Activated T-helper 2 cell treated with anti-CD3 and anti-CD28 coated beads, Interferon-gamma antibody, Interleukin-2, Interleukin-4, amounts not matched to agents 10 μg/mL and 5 μg/mL and 100 μg/mL, durations not matched to agents 14 hours and 24 hours and 36 hours (primary cell): ENCODE measurements at regions of chr9 and their contacts with region 1.

Region 1: DNA sequence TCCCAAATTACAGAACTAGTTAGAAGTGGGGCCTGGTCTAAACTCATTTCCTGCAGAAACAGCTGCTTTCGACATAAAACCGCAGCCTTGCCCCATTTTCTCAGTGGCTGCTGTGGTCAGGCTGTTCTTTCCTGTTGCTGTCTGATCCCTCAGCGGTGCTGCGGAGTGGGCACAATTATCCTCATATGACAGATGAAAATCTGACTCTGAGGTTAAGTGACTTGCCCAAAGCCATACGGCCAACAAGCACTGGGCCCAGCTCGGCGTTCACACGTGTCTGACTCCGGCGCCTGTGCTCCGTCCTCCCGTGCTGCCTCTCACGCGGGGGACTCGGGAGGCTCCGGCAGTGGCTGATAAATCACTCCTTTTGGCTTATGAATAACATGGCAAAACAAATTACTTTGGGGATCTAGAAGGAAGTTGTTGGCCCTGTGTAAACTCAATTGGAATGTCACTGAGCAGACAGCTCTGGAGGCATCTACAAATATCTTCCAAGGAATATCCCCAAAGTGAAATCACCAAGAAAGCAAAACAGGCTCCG is 142.6 kb upstream of the LMX1B start:
- DNase-seq: peak; percentile 81
- H3K4me3 Mint-ChIP-seq: peak overlapping the region; percentile 41
- H3K27ac Mint-ChIP-seq: peak overlapping the region; percentile 51
- H3K4me1 Mint-ChIP-seq: peaks cover 44% of the 10 kb centered on the region
- H3K27me3 Mint-ChIP-seq: peaks cover 63% of the 10 kb centered on the region

Region 2: DNA sequence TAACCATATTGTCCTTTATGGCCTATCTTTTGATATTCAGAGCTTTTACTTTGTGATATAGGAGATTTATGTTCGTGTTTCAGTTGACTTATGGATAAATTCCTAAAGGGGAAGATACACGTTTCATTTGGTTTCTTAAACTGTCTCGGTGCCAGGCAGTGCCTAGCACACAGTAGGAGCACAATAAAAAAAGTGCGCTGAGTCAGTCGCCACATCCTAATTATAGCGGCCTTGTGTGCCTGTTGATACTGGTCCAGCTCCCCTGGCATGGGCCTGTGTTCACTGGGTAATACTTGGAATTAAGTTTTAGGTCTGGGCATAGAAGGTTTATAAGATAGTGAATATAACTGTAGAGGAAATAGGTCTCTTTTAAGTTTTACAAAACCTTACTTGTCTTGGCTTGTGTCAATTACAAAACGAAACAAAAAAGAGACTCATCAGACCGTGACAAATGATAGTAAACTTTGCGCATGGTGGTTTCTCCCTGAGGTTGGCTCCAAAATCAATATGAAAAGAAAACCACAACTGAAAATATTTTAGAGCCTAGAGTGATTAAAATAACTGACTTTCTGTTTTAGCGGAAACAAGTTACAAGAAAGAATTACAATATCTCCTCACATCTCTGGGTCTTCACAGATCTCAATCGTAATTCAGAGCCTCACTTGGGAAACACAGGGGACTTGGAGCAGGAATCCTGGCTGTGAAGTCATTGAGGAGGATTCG is 59.8 kb before region 1 on chr9:
- intact Hi-C with region 1: loop called (anchors 1 kb)
- DNase-seq: peak; percentile 46
- H3K4me3 Mint-ChIP-seq: peak overlapping the region; percentile 35
- H3K27ac Mint-ChIP-seq: peak overlapping the region; percentile 58
- H3K4me1 Mint-ChIP-seq: peaks cover 32% of the 10 kb centered on the region
- H3K27me3 Mint-ChIP-seq: peaks cover 13% of the 10 kb centered on the region

Region 3: DNA sequence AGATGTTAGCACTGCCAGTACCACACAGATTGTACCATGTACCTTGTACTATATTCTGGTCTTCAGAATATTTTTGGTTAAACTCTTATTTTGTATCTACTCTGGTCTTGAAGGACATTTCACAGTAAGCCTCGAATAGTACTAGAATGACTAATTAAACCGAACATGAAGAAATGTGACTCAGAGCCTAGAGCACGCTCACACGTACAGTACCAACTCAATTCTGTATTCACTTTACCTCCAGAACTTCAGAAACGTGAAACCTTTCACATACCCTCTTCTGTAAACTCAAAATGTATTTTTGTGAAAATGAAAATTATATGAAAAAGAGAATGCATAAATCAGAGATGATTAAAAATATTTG is 31.8 kb before region 1 on chr9:
- intact Hi-C with region 1: loop called (anchors 2 kb)
- DNase-seq: no peak
- H3K4me3 Mint-ChIP-seq: no peak overlapping the region
- H3K27ac Mint-ChIP-seq: no peak overlapping the region
- H3K4me1 Mint-ChIP-seq: peaks cover 15% of the 10 kb centered on the region
- H3K27me3 Mint-ChIP-seq: peaks cover 28% of the 10 kb centered on the region